SK-N-SH (cell line): ENCODE measurements at regions of chr2 and their contacts with region 1.

Region 1: GRCh38 chr2:42944779-42945415 is 152.5 kb upstream of the HAAO start:
- DNase-seq: peak; percentile 56
- H3K4me3 ChIP-seq: no peak overlapping the region
- H3K27ac ChIP-seq: no peak overlapping the region
- H3K4me1 ChIP-seq: peaks cover 1 to 3% of the 10 kb centered on the region in 2 experiments; a peak in 2 of 4 replicates
- H3K27me3 ChIP-seq: no peaks in the 10 kb centered on the region
- CTCF ChIP-seq: no peak
- EP300 ChIP-seq: no peak
- RAD21 ChIP-seq: no peak

Region 2: DNA sequence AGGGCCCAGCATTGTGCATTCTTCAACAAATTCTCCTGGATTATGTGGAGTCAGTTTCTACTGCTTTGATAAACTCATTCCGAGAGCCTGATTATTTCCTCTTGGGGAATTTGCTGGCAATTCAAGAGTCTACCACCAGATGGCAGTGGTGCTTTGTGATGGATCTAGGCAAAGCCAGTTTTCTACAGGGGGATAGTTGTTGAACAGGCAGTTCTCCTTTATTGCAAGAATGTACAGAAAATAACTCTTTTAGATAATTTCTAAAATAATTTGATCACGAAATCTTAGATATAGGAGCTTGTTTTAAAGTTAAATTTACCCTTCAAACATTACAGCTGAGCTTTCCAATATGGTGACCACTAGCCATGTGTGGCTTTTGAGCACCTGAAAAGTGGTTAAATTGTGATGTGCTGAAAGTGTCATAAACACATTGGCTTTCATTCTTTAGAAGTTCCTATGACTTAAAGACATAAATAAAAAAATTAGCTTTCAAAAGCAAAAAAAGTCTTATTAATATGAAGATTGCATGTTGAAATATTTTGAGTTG is 85.8 kb before region 1 on chr2:
- CTCF ChIA-PET with region 1: interaction called, 13 read pairs
- POLR2A ChIA-PET with region 1: no interaction called
- DNase-seq: peak; percentile 86
- H3K4me3 ChIP-seq: no peak overlapping the region
- H3K27ac ChIP-seq: no peak overlapping the region
- H3K4me1 ChIP-seq: peaks cover 0 to 22% of the 10 kb centered on the region in 2 experiments; a peak in 1 of 4 replicates
- H3K27me3 ChIP-seq: no peaks in the 10 kb centered on the region
- CTCF ChIP-seq: peak; percentile 98
- EP300 ChIP-seq: no peak
- RAD21 ChIP-seq: peak; percentile 98

Region 3: DNA sequence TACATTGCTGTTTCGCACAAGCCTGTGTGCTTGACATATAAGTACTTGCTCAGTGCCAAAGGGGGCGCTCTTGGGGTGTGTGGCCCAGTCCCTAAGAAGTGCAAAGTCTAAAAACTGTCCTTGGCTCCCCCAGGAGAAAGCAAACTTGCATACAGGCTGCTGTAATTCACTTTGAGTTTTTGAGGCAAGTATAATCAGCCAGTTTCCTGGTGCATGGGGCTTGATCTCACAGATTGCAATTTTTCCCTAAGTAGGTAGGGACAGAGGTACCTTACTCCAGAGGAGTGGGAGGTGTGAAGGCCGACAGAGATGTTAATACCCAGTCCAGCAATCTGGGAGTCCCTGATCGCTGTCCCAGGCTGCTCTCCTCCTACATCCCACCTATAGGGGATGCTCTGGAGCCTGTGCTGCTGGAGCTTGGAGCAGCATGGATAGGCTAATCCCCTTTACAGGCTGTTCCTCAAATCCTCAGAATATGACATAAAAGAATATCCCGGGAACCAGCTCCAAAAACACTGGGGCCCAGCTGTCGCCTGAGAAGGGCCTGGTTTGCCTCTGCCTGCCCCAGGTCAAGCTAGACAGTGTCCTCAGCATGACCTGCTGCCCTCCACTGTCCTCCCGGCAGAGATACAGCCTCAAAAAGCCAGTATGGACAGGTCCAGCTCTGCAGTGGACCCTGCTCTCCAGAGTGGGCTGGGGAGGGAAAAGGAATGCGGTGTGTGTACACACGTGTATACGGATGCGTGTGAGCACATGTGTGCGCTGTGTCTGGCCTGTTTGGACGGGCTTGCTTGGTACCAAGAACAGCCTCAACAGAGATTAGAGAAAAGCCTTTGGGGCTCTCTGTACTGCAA is 16.0 kb before region 1 on chr2:
- CTCF ChIA-PET with region 1: interaction called, 96 read pairs
- POLR2A ChIA-PET with region 1: no interaction called
- DNase-seq: peak; percentile 76
- H3K4me3 ChIP-seq: no peak overlapping the region
- H3K27ac ChIP-seq: peak overlapping the region in 1 of 2 experiments; percentile 39; a peak in 1 of 4 replicates
- H3K4me1 ChIP-seq: peaks cover 25 to 70% of the 10 kb centered on the region in 2 experiments
- H3K27me3 ChIP-seq: no peaks in the 10 kb centered on the region
- CTCF ChIP-seq: peak; percentile 53
- EP300 ChIP-seq: no peak
- RAD21 ChIP-seq: peak; percentile 46

Region 4: GRCh38 chr2:42974721-42975717 is 30.1 kb after region 1 on chr2:
- CTCF ChIA-PET with region 1: interaction called, 58 read pairs
- POLR2A ChIA-PET with region 1: no interaction called
- DNase-seq: peak; percentile 95
- H3K4me3 ChIP-seq: peak overlapping the region; percentile 27 to 32; a peak in 3 of 4 replicates
- H3K27ac ChIP-seq: no peak overlapping the region; a peak in 1 of 4 replicates
- H3K4me1 ChIP-seq: peaks cover 11 to 14% of the 10 kb centered on the region in 2 experiments; a peak in 3 of 4 replicates
- H3K27me3 ChIP-seq: no peaks in the 10 kb centered on the region
- CTCF ChIP-seq: peak; percentile 95
- EP300 ChIP-seq: no peak
- RAD21 ChIP-seq: peak; percentile 97

Region 5: DNA sequence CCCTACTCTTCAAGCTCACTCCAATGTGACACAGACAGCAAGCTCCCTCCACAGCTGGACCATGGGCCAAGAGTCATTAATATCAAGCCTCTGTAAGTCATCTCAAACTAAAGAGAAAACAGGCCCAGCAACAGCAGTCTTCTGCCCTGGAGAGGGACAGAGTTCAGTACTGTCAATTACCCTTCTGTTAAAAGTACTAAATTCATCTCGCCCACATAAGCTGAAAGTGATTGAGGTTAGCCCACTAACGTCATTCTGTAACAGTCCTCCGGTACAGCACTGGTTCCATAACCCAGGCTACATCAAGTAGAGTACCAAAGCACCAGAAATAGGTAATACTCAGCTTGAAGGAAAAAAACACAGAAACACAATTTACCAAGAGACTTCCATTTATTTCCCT is 625.0 kb after region 1 on chr2:
- CTCF ChIA-PET with region 1: interaction called, 10 read pairs
- POLR2A ChIA-PET with region 1: no interaction called
- DNase-seq: no peak
- H3K4me3 ChIP-seq: no peak overlapping the region
- H3K27ac ChIP-seq: no peak overlapping the region
- H3K4me1 ChIP-seq: no peaks in the 10 kb centered on the region
- H3K27me3 ChIP-seq: no peaks in the 10 kb centered on the region
- CTCF ChIP-seq: no peak
- EP300 ChIP-seq: no peak
- RAD21 ChIP-seq: no peak

Region 6: GRCh38 chr2:43611987-43612894 is 667.3 kb after region 1 on chr2:
- CTCF ChIA-PET with region 1: interaction called, 13 read pairs
- POLR2A ChIA-PET with region 1: no interaction called
- DNase-seq: peak; percentile 82
- H3K4me3 ChIP-seq: no peak overlapping the region; a peak in 1 of 4 replicates
- H3K27ac ChIP-seq: no peak overlapping the region
- H3K4me1 ChIP-seq: no peaks in the 10 kb centered on the region
- H3K27me3 ChIP-seq: no peaks in the 10 kb centered on the region
- CTCF ChIP-seq: peak; percentile 97
- EP300 ChIP-seq: no peak
- RAD21 ChIP-seq: peak; percentile 90

Region 7: GRCh38 chr2:43905371-43905803 is 960.5 kb after region 1 on chr2:
- CTCF ChIA-PET with region 1: no interaction called
- POLR2A ChIA-PET with region 1: no interaction called
- DNase-seq: no peak
- H3K4me3 ChIP-seq: no peak overlapping the region
- H3K27ac ChIP-seq: no peak overlapping the region; a peak in 1 of 4 replicates
- H3K4me1 ChIP-seq: peaks cover 0 to 7% of the 10 kb centered on the region in 2 experiments; a peak in 1 of 4 replicates
- H3K27me3 ChIP-seq: no peaks in the 10 kb centered on the region
- CTCF ChIP-seq: no peak
- EP300 ChIP-seq: no peak
- RAD21 ChIP-seq: no peak